ENCODE measurements at regions of chr2 and their contacts with region 1.

Region 1: GRCh38 chr2:68909793-68910674 is 38.8 kb upstream of the BMP10 start:
- DNase-seq: peak; percentile 82
- H3K4me3 ChIP-seq: no peak overlapping the region
- H3K27ac ChIP-seq: peak overlapping the region in 2 of 8 donors; percentile 83 to 86
- H3K4me1 ChIP-seq: peaks cover 14 to 57% (median 37%) of the 10 kb centered on the region in 6 donors
- H3K27me3 ChIP-seq: no peaks in the 10 kb centered on the region
- CTCF ChIP-seq: peak; percentile 80 to 96 (median 93)
- POLR2A ChIP-seq: no peak

Region 2: GRCh38 chr2:68467077-68467960 is 442.7 kb before region 1 on chr2 and contains the starts of genes APLF and FBXO48:
- intact Hi-C with region 1: loop called (anchors 10 kb)
- DNase-seq: peak; percentile 99
- H3K4me3 ChIP-seq: peak within 1 kb of the TSS; percentile 49 to 94 (median 73)
- H3K27ac ChIP-seq: peak within 1 kb of the TSS; percentile 64 to 97 (median 93)
- H3K4me1 ChIP-seq: peaks cover 17 to 59% (median 32%) of the 10 kb centered on the region in 6 donors
- H3K27me3 ChIP-seq: no peaks in the 10 kb centered on the region
- CTCF ChIP-seq: peak in 2 of 11 experiments; percentile 24 to 33
- POLR2A ChIP-seq: peak; percentile 14 to 66 (median 48)
- total RNA-seq, gene APLF: 4.1 to 7.2 (median 6.0) TPM
- total RNA-seq, gene FBXO48: 1.2 to 2.6 (median 2.3) TPM

Region 3: GRCh38 chr2:68849579-68850030 is 60.4 kb before region 1 on chr2:
- intact Hi-C with region 1: loop called (anchors 10 kb)
- DNase-seq: no peak
- H3K4me3 ChIP-seq: no peak overlapping the region
- H3K27ac ChIP-seq: no peak overlapping the region
- H3K4me1 ChIP-seq: peaks cover 0 to 4% (median 0%) of the 10 kb centered on the region in 6 donors
- H3K27me3 ChIP-seq: no peaks in the 10 kb centered on the region
- CTCF ChIP-seq: no peak
- POLR2A ChIP-seq: no peak

Region 4: GRCh38 chr2:69306822-69307578 is 397.0 kb after region 1 on chr2:
- intact Hi-C with region 1: no loop called
- DNase-seq: peak; percentile 93
- H3K4me3 ChIP-seq: peak overlapping the region; percentile 25 to 78 (median 52)
- H3K27ac ChIP-seq: peak overlapping the region; percentile 27 to 82 (median 70)
- H3K4me1 ChIP-seq: peaks cover 11 to 41% (median 25%) of the 10 kb centered on the region in 6 donors
- H3K27me3 ChIP-seq: peaks cover 0 to 40% (median 15%) of the 10 kb centered on the region in 7 donors
- CTCF ChIP-seq: peak; percentile 60 to 88 (median 84)
- POLR2A ChIP-seq: no peak